CD8-positive, alpha-beta memory T cell (primary cell): ENCODE measurements at regions of chr1 and their contacts with region 1.

Region 1: DNA sequence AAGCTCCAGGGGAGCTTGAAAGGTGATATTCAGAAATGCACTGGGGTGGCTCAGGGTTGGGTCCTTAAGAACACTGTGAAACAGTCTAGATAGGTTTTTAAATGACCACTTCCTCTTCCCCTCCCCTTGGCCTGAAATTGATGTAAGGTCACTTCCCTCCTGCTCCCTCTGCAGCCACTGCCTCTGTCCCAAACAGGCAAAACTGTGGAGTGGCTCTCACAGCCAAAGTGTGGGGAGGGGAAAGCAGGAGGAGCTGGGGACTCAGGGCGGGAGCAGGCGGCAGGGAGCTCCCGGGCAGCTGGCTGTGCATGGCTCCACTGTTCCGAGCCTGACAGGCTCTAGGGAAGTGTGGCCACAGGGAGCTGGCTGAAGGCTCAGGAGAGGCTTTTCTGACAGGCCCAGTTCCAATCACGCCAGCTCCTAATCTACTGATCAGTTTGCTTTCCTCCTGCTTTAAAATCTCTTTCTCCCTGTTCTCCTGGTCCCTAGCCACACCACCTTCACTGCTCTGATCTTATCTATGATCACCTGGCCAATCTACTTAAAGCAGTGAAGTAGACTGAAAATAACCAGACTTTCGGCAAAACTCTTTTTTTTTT is 5.1 kb upstream of the CSRP1 start:
- DNase-seq: no peak
- H3K4me3 ChIP-seq: no peak overlapping the region
- H3K4me3 Mint-ChIP-seq: peak overlapping the region in 1 of 7 donors; percentile 11
- H3K27ac ChIP-seq: no peak overlapping the region
- H3K27ac Mint-ChIP-seq: peak overlapping the region in 1 of 8 donors; percentile 66
- H3K4me1 ChIP-seq: peaks cover 8% of the 10 kb centered on the region
- H3K4me1 Mint-ChIP-seq: peaks cover 13 to 23% (median 17%) of the 10 kb centered on the region in 3 donors
- H3K27me3 ChIP-seq: no peaks in the 10 kb centered on the region
- H3K27me3 Mint-ChIP-seq: peaks cover 0 to 1% of the 10 kb centered on the region in 2 donors

Region 2: GRCh38 chr1:201447911-201448871 is 63.8 kb before region 1 on chr1:
- CTCF ChIA-PET with region 1: interaction called, 31 read pairs
- POLR2A ChIA-PET with region 1: no interaction called
- DNase-seq: peak; percentile 15 to 64 (median 28)
- H3K4me3 ChIP-seq: no peak overlapping the region
- H3K4me3 Mint-ChIP-seq: no peak overlapping the region
- H3K27ac ChIP-seq: no peak overlapping the region
- H3K27ac Mint-ChIP-seq: no peak overlapping the region
- H3K4me1 ChIP-seq: peaks cover 8% of the 10 kb centered on the region
- H3K4me1 Mint-ChIP-seq: peaks cover 0 to 6% (median 3%) of the 10 kb centered on the region in 3 donors
- H3K27me3 ChIP-seq: no peaks in the 10 kb centered on the region
- H3K27me3 Mint-ChIP-seq: peaks cover 6 to 31% of the 10 kb centered on the region in 2 donors

Region 3: DNA sequence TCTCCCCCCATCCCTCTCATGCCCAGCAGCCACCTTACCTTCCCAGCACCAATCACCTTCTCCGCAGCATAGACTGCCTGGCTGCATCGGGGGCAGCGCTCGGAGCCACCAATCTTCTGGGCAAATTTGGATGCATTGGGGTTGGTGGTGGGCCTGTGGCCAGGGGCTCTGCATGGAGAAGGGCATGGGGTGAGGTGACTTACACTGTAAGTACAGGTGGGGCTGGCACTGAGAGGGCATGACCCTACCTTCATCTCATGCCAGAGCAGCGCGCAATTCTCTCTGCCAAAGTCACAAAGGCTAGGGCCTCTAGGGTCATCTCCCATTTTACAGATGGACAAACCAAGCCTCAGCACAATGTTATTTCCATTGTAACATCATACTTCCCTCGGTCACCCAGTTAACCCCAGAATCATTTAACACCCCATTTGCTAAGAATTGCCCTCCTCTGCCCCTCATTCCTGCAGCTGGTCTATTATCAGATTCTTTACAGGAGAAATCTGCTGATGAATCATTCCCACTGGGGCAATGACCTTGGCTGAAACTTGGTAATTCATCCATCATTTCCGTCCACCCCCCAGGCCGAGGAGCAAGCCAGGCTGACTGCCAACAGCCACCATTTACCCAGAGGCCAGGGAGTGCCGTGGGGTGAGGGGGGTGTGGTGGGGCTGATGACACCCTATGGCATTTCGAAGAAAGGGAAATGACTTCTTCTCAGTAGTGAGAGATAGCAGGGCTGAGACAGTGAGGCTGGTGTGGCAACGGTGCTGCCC is 23.0 kb before region 1 on chr1:
- CTCF ChIA-PET with region 1: interaction called, 406 read pairs
- POLR2A ChIA-PET with region 1: no interaction called
- DNase-seq: no peak
- H3K4me3 ChIP-seq: no peak overlapping the region
- H3K4me3 Mint-ChIP-seq: no peak overlapping the region
- H3K27ac ChIP-seq: no peak overlapping the region
- H3K27ac Mint-ChIP-seq: no peak overlapping the region
- H3K4me1 ChIP-seq: no peaks in the 10 kb centered on the region
- H3K4me1 Mint-ChIP-seq: no peaks in the 10 kb centered on the region
- H3K27me3 ChIP-seq: no peaks in the 10 kb centered on the region
- H3K27me3 Mint-ChIP-seq: no peaks in the 10 kb centered on the region

Region 4: DNA sequence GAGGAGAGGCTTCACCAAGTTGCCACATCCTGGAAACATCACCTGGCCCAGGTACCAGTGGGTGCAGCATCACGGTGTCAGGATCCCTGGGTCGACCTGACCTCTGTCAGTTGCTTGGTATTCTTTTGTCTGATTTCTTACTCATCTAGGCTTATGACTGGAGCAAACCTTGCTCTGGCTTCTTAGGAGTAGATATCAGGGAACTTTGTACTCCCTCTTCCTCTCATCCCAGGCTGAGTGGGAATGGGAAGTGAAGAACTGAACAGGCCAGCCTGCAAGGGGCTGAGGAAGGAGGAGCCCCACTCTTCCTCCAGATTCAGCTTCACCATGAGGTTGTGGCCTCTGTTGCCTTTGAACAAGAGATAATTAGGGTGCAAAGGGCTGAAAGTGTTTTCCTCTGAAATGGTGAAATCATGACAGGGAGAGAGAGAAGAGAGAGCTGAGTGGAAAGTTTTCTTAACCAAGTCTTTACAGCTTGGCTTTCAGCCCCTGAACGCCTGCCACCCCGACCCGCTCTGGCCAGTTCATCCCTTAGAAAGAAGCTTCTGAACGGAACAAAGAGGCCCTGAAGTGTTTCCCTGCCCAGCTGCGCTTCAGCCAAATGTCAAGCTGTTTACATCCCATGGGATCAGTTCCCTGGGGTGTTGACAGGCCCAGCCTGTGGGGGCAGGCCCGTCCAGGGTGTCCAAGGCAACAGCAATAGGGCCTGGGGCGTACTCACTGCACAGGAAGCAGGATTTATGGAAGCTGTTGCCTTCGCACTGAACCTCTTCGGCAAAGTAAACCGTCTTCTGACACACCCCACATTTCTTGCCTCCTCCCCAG is 16.4 kb before region 1 on chr1:
- CTCF ChIA-PET with region 1: interaction called, 47 read pairs
- POLR2A ChIA-PET with region 1: no interaction called
- DNase-seq: no peak
- H3K4me3 ChIP-seq: no peak overlapping the region
- H3K4me3 Mint-ChIP-seq: no peak overlapping the region
- H3K27ac ChIP-seq: no peak overlapping the region
- H3K27ac Mint-ChIP-seq: peak overlapping the region in 1 of 8 donors; percentile 54
- H3K4me1 ChIP-seq: no peaks in the 10 kb centered on the region
- H3K4me1 Mint-ChIP-seq: peaks cover 0 to 14% (median 4%) of the 10 kb centered on the region in 3 donors
- H3K27me3 ChIP-seq: no peaks in the 10 kb centered on the region
- H3K27me3 Mint-ChIP-seq: peaks cover 0 to 2% of the 10 kb centered on the region in 2 donors

Region 5: GRCh38 chr1:201500670-201501120 is 11.3 kb before region 1 on chr1:
- CTCF ChIA-PET with region 1: interaction called, 47 read pairs
- POLR2A ChIA-PET with region 1: no interaction called
- DNase-seq: no peak
- H3K4me3 ChIP-seq: no peak overlapping the region
- H3K4me3 Mint-ChIP-seq: no peak overlapping the region
- H3K27ac ChIP-seq: no peak overlapping the region
- H3K27ac Mint-ChIP-seq: peak overlapping the region in 1 of 8 donors; percentile 17
- H3K4me1 ChIP-seq: peaks cover 9% of the 10 kb centered on the region
- H3K4me1 Mint-ChIP-seq: peaks cover 15 to 33% (median 27%) of the 10 kb centered on the region in 3 donors
- H3K27me3 ChIP-seq: no peaks in the 10 kb centered on the region
- H3K27me3 Mint-ChIP-seq: peaks cover 0 to 2% of the 10 kb centered on the region in 2 donors

Region 6: GRCh38 chr1:201530741-201531531 is 18.9 kb after region 1 on chr1:
- CTCF ChIA-PET with region 1: interaction called, 18 read pairs
- POLR2A ChIA-PET with region 1: no interaction called
- DNase-seq: no peak
- H3K4me3 ChIP-seq: no peak overlapping the region
- H3K4me3 Mint-ChIP-seq: no peak overlapping the region
- H3K27ac ChIP-seq: no peak overlapping the region
- H3K27ac Mint-ChIP-seq: peak overlapping the region in 1 of 8 donors; percentile 81
- H3K4me1 ChIP-seq: no peaks in the 10 kb centered on the region
- H3K4me1 Mint-ChIP-seq: no peaks in the 10 kb centered on the region
- H3K27me3 ChIP-seq: no peaks in the 10 kb centered on the region
- H3K27me3 Mint-ChIP-seq: peaks cover 5 to 19% of the 10 kb centered on the region in 2 donors

Region 7: DNA sequence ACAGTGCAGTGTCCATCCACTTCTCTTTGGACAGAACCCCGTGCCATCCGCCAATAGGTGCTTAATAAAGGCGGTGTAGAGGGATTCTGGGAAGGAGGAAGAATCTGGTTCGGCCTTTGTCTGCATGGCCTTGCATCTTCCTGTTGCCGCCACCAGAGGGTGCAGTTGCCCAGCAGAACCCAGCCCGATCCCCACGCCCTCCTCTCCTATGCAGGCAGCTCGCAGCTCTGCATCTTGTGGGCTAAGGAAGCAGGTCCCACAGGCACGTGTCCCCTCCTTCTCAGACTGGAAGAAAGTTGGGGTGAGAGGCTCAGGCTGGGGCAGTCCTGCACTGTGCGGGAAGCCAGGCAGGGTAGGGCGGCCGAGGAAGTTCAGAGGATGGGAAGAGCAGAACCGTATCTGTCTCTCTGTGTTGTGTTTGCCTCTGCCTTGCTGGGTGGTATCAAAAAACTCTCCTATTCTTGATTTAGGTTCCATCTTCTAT is 47.7 kb after region 1 on chr1:
- CTCF ChIA-PET with region 1: no interaction called
- POLR2A ChIA-PET with region 1: no interaction called
- DNase-seq: peak; percentile 27 to 70 (median 40)
- H3K4me3 ChIP-seq: no peak overlapping the region
- H3K4me3 Mint-ChIP-seq: no peak overlapping the region
- H3K27ac ChIP-seq: no peak overlapping the region
- H3K27ac Mint-ChIP-seq: peak overlapping the region in 1 of 8 donors; percentile 47
- H3K4me1 ChIP-seq: no peaks in the 10 kb centered on the region
- H3K4me1 Mint-ChIP-seq: peaks cover 2 to 10% (median 6%) of the 10 kb centered on the region in 3 donors
- H3K27me3 ChIP-seq: no peaks in the 10 kb centered on the region
- H3K27me3 Mint-ChIP-seq: peaks cover 3 to 4% of the 10 kb centered on the region in 2 donors

Region 8: GRCh38 chr1:201582705-201583442 is 70.8 kb after region 1 on chr1:
- CTCF ChIA-PET with region 1: no interaction called
- POLR2A ChIA-PET with region 1: no interaction called
- DNase-seq: no peak
- H3K4me3 ChIP-seq: no peak overlapping the region
- H3K4me3 Mint-ChIP-seq: no peak overlapping the region
- H3K27ac ChIP-seq: peak overlapping the region; percentile 54
- H3K27ac Mint-ChIP-seq: no peak overlapping the region
- H3K4me1 ChIP-seq: no peaks in the 10 kb centered on the region
- H3K4me1 Mint-ChIP-seq: no peaks in the 10 kb centered on the region
- H3K27me3 ChIP-seq: no peaks in the 10 kb centered on the region
- H3K27me3 Mint-ChIP-seq: peaks cover 5 to 17% of the 10 kb centered on the region in 2 donors